HepG2 (cell line): ENCODE measurements at regions of chr2 and their contacts with region 1.

Region 1: GRCh38 chr2:125581557-125581956 is 1074.4 kb upstream of the GYPC start:
- DNase-seq: no peak
- ATAC-seq: no peak
- H3K4me3 ChIP-seq: no peak overlapping the region
- H3K27ac ChIP-seq: no peak overlapping the region
- H3K4me1 ChIP-seq: no peaks in the 10 kb centered on the region
- H3K27me3 ChIP-seq: no peaks in the 10 kb centered on the region
- CTCF ChIP-seq: no peak
- EP300 ChIP-seq: no peak
- POLR2A ChIP-seq: no peak
- RAD21 ChIP-seq: no peak

Region 2: GRCh38 chr2:124623560-124623959 is 958.0 kb before region 1 on chr2:
- CTCF ChIA-PET with region 1: no interaction called
- POLR2A ChIA-PET with region 1: no interaction called
- in situ Hi-C with region 1: no loop called
- intact Hi-C with region 1: loop called (anchors 5 kb)
- DNase-seq: no peak
- ATAC-seq: no peak
- H3K4me3 ChIP-seq: no peak overlapping the region
- H3K27ac ChIP-seq: no peak overlapping the region
- H3K4me1 ChIP-seq: no peaks in the 10 kb centered on the region
- H3K27me3 ChIP-seq: peaks cover 0 to 12% of the 10 kb centered on the region in 2 experiments; a peak in 2 of 5 replicates
- CTCF ChIP-seq: no peak
- EP300 ChIP-seq: no peak
- POLR2A ChIP-seq: no peak
- RAD21 ChIP-seq: no peak

Region 3: GRCh38 chr2:125564471-125564870 is 17.1 kb before region 1 on chr2:
- CTCF ChIA-PET with region 1: no interaction called
- POLR2A ChIA-PET with region 1: no interaction called
- in situ Hi-C with region 1: no loop called
- intact Hi-C with region 1: no loop called
- DNase-seq: no peak
- ATAC-seq: no peak
- H3K4me3 ChIP-seq: no peak overlapping the region
- H3K27ac ChIP-seq: no peak overlapping the region
- H3K4me1 ChIP-seq: no peaks in the 10 kb centered on the region
- H3K27me3 ChIP-seq: no peaks in the 10 kb centered on the region
- CTCF ChIP-seq: no peak
- EP300 ChIP-seq: no peak
- POLR2A ChIP-seq: no peak
- RAD21 ChIP-seq: no peak